ENCODE measurements at regions of chr12 and their contacts with region 1.

Region 1: DNA sequence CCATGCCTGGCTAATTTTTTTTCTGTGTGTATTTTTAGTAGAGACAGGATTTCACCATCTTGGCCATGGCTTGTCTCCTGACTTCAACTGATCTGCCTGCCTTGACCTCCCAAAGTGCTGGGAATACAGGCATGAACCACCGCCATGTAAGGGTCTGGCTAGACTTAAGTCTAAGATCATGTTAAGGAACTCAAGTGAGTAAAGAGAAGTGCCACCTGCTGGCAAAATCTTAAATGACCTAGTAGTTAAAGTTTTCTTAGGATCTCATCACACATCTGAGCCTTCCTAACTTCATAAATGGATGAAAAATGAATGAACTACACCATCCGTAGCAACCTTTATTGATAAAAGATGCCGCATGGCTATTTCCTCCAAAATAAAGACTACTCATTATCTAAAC is 1.7 kb upstream of the C12orf56 start:
- DNase-seq: peak in 4 of 14 experiments; percentile 48 to 61 (median 57)
- ATAC-seq: peak; percentile 49
- H3K4me3 ChIP-seq: no peak overlapping the region
- H3K4me3 Mint-ChIP-seq: peak overlapping the region; percentile 75
- H3K27ac ChIP-seq: no peak overlapping the region
- H3K27ac Mint-ChIP-seq: peak overlapping the region; percentile 24
- H3K4me1 ChIP-seq: peaks cover 11% of the 10 kb centered on the region
- H3K4me1 Mint-ChIP-seq: peaks cover 12% of the 10 kb centered on the region
- H3K27me3 ChIP-seq: no peaks in the 10 kb centered on the region
- H3K27me3 Mint-ChIP-seq: peaks cover 11% of the 10 kb centered on the region
- CTCF ChIP-seq: peak; percentile 48

Region 2: DNA sequence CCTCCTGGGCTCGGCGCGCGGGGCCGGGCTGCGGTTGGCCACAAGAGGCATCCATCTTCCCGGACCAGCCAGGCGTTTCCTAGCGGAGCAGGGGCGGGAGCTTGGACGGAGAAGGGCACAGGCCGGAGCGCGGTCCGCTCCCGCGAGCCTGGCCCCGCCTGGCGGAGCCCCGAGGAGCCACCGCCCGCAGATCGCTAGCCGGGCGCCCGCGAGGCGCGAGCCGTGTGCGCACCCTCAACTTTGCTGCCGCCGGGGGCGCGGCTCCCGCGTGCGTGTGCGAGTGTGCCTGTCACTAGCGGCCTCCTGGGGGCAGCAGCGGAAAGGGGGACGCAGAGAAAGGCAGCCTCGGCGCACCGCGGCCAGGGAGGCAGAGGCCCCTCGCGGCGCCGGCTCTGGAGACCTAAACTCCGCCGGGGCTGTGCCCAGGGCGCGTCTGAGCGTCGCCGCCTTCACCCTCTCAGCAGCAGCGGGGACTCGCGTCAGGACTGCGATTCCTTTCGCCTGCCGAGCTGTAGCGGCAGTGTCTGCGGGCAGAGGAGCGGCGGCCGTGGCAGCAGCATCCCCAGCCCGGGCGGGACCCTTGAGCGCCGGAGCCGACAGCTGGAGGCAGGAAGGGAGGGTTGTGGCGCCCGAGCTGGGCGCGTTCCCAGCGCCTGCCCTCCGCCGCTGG is 548.4 kb before region 1 on chr12:
- CTCF ChIA-PET with region 1: no interaction called
- POLR2A ChIA-PET with region 1: no interaction called
- intact Hi-C with region 1: loop called (anchors 5 kb)
- DNase-seq: peak; percentile 50 to 90 (median 68)
- ATAC-seq: peak; percentile 96
- H3K4me3 ChIP-seq: peak overlapping the region; percentile 50
- H3K4me3 Mint-ChIP-seq: peak overlapping the region; percentile 72
- H3K27ac ChIP-seq: no peak overlapping the region
- H3K27ac Mint-ChIP-seq: no peak overlapping the region
- H3K4me1 ChIP-seq: peaks cover 15% of the 10 kb centered on the region
- H3K4me1 Mint-ChIP-seq: peaks cover 6% of the 10 kb centered on the region
- H3K27me3 ChIP-seq: peaks cover 10 to 24% of the 10 kb centered on the region in 2 experiments
- H3K27me3 Mint-ChIP-seq: peaks cover 29% of the 10 kb centered on the region
- CTCF ChIP-seq: peak; percentile 71

Region 3: DNA sequence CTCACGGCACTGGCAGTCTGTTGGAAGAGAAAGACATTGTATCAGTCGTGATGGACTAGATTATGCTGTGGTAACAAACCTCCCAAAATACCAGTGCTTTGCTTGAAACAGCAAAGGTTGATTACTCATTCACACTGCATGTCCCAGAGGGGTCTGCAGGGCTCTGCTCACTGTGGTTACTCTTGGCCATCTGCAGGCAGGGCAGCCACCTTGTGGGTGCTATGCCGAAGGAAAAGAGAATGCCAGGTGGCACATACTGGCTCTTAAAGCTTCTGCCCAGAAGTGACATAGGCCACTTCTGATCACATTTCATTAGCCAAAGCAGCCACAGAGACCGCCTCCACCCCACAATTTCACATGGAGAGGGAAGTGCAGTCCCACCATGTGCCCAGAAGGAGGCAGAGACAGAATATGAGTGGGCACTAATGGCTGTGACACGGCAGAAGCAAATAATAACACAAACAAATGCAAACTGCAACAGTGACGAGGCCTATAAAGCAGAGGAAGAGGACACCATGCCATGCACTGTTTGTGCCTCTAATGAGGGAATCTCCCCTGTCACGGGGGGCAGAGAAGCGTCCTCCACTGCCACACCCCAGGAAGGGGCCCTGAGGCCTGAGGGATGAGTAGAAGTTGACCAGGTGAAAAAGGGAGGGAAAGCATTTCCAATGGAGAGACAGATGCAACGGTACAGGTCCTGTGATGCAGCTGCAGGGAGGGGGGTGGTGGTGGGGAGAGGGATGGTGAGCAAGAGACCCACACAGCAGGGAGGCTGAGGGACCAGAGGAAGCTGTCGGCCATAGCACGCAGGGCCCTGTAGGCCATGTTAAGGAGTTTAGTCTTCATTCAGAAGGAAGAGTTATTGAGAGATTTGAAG is 118.5 kb before region 1 on chr12:
- CTCF ChIA-PET with region 1: no interaction called
- POLR2A ChIA-PET with region 1: no interaction called
- intact Hi-C with region 1: loop called in 1 of 2 experiments (anchors 5 kb)
- DNase-seq: peak in 8 of 14 experiments; percentile 0 to 43 (median 11)
- ATAC-seq: peak; percentile 37
- H3K4me3 ChIP-seq: no peak overlapping the region
- H3K4me3 Mint-ChIP-seq: no peak overlapping the region
- H3K27ac ChIP-seq: no peak overlapping the region
- H3K27ac Mint-ChIP-seq: no peak overlapping the region
- H3K4me1 ChIP-seq: no peaks in the 10 kb centered on the region
- H3K4me1 Mint-ChIP-seq: no peaks in the 10 kb centered on the region
- H3K27me3 ChIP-seq: no peaks in the 10 kb centered on the region
- H3K27me3 Mint-ChIP-seq: no peaks in the 10 kb centered on the region
- CTCF ChIP-seq: peak; percentile 22

Region 4: GRCh38 chr12:64419696-64420095 is 27.5 kb after region 1 on chr12:
- CTCF ChIA-PET with region 1: no interaction called
- POLR2A ChIA-PET with region 1: no interaction called
- intact Hi-C with region 1: no loop called
- DNase-seq: no peak
- ATAC-seq: no peak
- H3K4me3 ChIP-seq: no peak overlapping the region
- H3K4me3 Mint-ChIP-seq: no peak overlapping the region
- H3K27ac ChIP-seq: no peak overlapping the region
- H3K27ac Mint-ChIP-seq: no peak overlapping the region
- H3K4me1 ChIP-seq: no peaks in the 10 kb centered on the region
- H3K4me1 Mint-ChIP-seq: no peaks in the 10 kb centered on the region
- H3K27me3 ChIP-seq: no peaks in the 10 kb centered on the region
- H3K27me3 Mint-ChIP-seq: no peaks in the 10 kb centered on the region
- CTCF ChIP-seq: no peak